HEK293 (cell line): ENCODE measurements at regions of chr14 and their contacts with region 1.

Region 1: GRCh38 chr14:103500148-103500990 is 22.3 kb downstream of the CKB start:
- H3K4me3 ChIP-seq: no peak overlapping the region
- H3K27ac ChIP-seq: no peak overlapping the region
- H3K4me1 ChIP-seq: no peaks in the 10 kb centered on the region
- CTCF ChIP-seq: peak; percentile 81

Region 2: GRCh38 chr14:102831163-102831804 is 669.1 kb before region 1 on chr14:
- CTCF ChIA-PET with region 1: no interaction called
- POLR2A ChIA-PET with region 1: no interaction called
- H3K4me3 ChIP-seq: no peak overlapping the region
- H3K27ac ChIP-seq: no peak overlapping the region
- H3K4me1 ChIP-seq: 0 out of 2 replicates have a peak, but pooled peaks cover 3% of the 10 kb centered on the region
- CTCF ChIP-seq: no peak

Region 3: GRCh38 chr14:103488071-103488470 is 12.3 kb before region 1 on chr14:
- CTCF ChIA-PET with region 1: interaction called, 15 read pairs
- POLR2A ChIA-PET with region 1: no interaction called
- H3K4me3 ChIP-seq: no peak overlapping the region
- H3K27ac ChIP-seq: no peak overlapping the region
- H3K4me1 ChIP-seq: no peaks in the 10 kb centered on the region
- CTCF ChIP-seq: no peak

Region 4: GRCh38 chr14:103546652-103547454 is 46.5 kb after region 1 on chr14:
- CTCF ChIA-PET with region 1: interaction called, 25 read pairs
- POLR2A ChIA-PET with region 1: no interaction called
- H3K4me3 ChIP-seq: no peak overlapping the region
- H3K27ac ChIP-seq: no peak overlapping the region
- H3K4me1 ChIP-seq: no peaks in the 10 kb centered on the region; the same call in 1 of the 2 replicates
- CTCF ChIP-seq: peak; percentile 99